Cardiac septum (tissue), 1 donor: ENCODE measurements at regions of chr1 and their contacts with region 1.

Region 1: GRCh38 chr1:237041795-237042525 is at the start of gene RYR2:
- DNase-seq: no peak
- total RNA-seq, gene RYR2: 572 TPM

Region 2: GRCh38 chr1:236893626-236894545 is 148.1 kb before region 1 on chr1:
- intact Hi-C with region 1: loop called (anchors 5 kb)
- DNase-seq: no peak

Region 3: GRCh38 chr1:236997882-236998281 is 44.1 kb before region 1 on chr1:
- intact Hi-C with region 1: loop called (anchors 2 kb)
- DNase-seq: peak; percentile 84

Region 4: GRCh38 chr1:237054313-237054712 is 12.4 kb after region 1 on chr1:
- intact Hi-C with region 1: no loop called
- DNase-seq: no peak

Region 5: GRCh38 chr1:237386362-237387143 is 344.6 kb after region 1 on chr1:
- intact Hi-C with region 1: loop called (anchors 5 kb)
- DNase-seq: no peak